AG04449 (cell line): ENCODE measurements at regions of chr3 and their contacts with region 1.

Region 1: GRCh38 chr3:183766745-183767606 is 58.4 kb downstream of the MAP6D1 start:
- DNase-seq: no peak
- H3K4me3 ChIP-seq: no peak overlapping the region
- CTCF ChIP-seq: peak; percentile 78

Region 2: GRCh38 chr3:183468424-183468823 is 298.6 kb before region 1 on chr3:
- CTCF ChIA-PET with region 1: interaction called, 12 read pairs
- POLR2A ChIA-PET with region 1: no interaction called
- DNase-seq: no peak
- H3K4me3 ChIP-seq: no peak overlapping the region
- CTCF ChIP-seq: no peak

Region 3: GRCh38 chr3:183502237-183503181 is 264.5 kb before region 1 on chr3:
- CTCF ChIA-PET with region 1: interaction called, 22 read pairs
- POLR2A ChIA-PET with region 1: no interaction called
- DNase-seq: no peak
- H3K4me3 ChIP-seq: no peak overlapping the region
- CTCF ChIP-seq: no peak

Region 4: GRCh38 chr3:183754052-183754451 is 12.9 kb before region 1 on chr3:
- CTCF ChIA-PET with region 1: interaction called, 14 read pairs
- POLR2A ChIA-PET with region 1: no interaction called
- DNase-seq: no peak
- H3K4me3 ChIP-seq: no peak overlapping the region
- CTCF ChIP-seq: no peak